Activated CD4-positive, alpha-beta memory T cell treated with anti-CD3 and anti-CD28 coated beads for 36 hours (primary cell): ENCODE measurements at regions of chr13 and their contacts with region 1.

Region 1: GRCh38 chr13:76991796-76992547 is at the start of gene CLN5:
- DNase-seq: peak; percentile 97
- H3K4me3 Mint-ChIP-seq: peak within 1 kb of the TSS; percentile 94
- H3K27ac Mint-ChIP-seq: peak within 1 kb of the TSS; percentile 99
- H3K4me1 Mint-ChIP-seq: peaks cover 41% of the 10 kb centered on the region
- H3K27me3 Mint-ChIP-seq: peaks cover 1% of the 10 kb centered on the region
- total RNA-seq, gene CLN5: 12.4 to 14.0 TPM

Region 2: DNA sequence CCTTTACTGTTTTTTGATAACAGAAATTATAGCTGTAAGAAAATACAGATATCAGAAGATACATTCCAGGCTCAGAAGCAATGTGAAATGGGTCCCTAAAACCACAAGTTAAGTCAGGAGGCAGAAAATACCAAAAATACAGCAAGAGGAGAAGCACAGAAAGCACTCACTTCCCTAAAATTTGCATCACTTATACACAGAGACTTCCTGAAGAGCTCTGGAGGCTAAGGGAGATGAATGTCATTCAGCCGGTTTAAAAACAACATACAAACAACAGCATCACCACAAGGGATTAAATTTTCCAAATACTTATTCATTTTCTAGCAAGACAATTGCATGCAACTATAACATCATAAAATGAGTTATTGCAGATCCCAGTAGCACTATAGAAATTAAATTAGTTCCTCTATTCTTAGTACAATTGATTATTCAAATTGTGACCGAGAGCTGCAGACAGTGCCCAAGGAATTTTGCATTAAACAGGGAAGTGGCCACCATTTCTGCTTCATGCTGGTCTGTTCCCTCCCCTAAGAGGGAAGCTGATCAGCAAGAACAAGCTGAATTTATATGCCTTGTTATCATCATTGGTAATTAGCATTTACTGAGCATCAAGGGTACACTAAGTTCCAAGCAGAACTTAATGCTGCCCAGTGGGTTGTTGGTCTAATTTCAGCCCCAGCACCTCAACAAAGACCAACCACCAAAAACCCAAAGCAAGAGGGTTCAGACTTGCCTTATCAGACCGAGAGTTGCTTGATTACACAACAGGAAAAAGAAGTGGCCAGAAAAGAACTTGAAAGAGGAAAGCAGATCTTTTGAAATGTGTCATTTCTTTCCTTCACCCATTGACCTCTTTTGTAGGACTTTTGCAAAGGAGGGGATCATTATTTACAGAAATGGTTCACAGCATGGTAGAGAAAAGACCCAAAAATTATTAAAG is 246.4 kb before region 1 on chr13:
- CTCF ChIA-PET with region 1: no interaction called
- POLR2A ChIA-PET with region 1: no interaction called
- intact Hi-C with region 1: no loop called
- DNase-seq: no peak
- H3K4me3 Mint-ChIP-seq: no peak overlapping the region
- H3K27ac Mint-ChIP-seq: no peak overlapping the region
- H3K4me1 Mint-ChIP-seq: no peaks in the 10 kb centered on the region
- H3K27me3 Mint-ChIP-seq: peaks cover 6% of the 10 kb centered on the region

Region 3: GRCh38 chr13:76828316-76828741 is 163.6 kb before region 1 on chr13:
- CTCF ChIA-PET with region 1: no interaction called
- POLR2A ChIA-PET with region 1: no interaction called
- intact Hi-C with region 1: loop called (anchors 1 kb)
- DNase-seq: peak; percentile 22
- H3K4me3 Mint-ChIP-seq: no peak overlapping the region
- H3K27ac Mint-ChIP-seq: peak overlapping the region; percentile 1
- H3K4me1 Mint-ChIP-seq: peaks cover 10% of the 10 kb centered on the region
- H3K27me3 Mint-ChIP-seq: peaks cover 2% of the 10 kb centered on the region

Region 4: DNA sequence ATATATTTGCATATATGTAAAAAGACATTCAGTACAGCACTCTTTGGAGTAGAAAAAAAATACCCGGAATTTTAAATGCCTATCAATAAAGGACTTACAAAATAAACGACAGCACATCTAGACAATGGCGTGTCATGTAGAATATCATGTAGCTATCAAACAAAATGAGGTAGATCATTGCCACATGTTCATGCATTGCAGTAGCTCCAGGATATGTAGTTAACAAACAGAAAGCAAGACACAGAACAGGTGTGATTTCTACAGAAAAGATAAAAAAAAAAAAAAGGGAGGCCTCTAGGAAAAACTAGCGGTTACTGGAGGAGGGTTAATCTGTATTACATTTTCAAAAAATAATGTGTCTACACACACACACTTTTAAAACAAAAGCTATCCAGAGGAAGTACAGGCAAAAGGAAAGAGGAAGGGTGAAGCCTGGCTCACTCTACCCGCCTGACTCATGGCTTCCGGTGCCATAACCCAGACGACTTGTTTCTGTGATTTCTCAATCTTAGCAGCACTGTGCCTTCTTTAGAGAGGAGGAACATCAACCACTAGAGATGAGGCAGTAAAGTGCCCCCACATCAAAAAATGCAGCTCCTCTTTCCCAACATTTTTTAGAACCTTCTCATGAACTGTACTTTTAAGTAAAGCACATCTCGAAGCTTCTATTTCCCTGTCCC is 112.6 kb before region 1 on chr13:
- CTCF ChIA-PET with region 1: no interaction called
- POLR2A ChIA-PET with region 1: interaction called, 5 read pairs
- intact Hi-C with region 1: loop called (anchors 1 kb)
- DNase-seq: peak; percentile 82
- H3K4me3 Mint-ChIP-seq: peak overlapping the region; percentile 60
- H3K27ac Mint-ChIP-seq: peak overlapping the region; percentile 77
- H3K4me1 Mint-ChIP-seq: peaks cover 33% of the 10 kb centered on the region
- H3K27me3 Mint-ChIP-seq: no peaks in the 10 kb centered on the region

Region 5: DNA sequence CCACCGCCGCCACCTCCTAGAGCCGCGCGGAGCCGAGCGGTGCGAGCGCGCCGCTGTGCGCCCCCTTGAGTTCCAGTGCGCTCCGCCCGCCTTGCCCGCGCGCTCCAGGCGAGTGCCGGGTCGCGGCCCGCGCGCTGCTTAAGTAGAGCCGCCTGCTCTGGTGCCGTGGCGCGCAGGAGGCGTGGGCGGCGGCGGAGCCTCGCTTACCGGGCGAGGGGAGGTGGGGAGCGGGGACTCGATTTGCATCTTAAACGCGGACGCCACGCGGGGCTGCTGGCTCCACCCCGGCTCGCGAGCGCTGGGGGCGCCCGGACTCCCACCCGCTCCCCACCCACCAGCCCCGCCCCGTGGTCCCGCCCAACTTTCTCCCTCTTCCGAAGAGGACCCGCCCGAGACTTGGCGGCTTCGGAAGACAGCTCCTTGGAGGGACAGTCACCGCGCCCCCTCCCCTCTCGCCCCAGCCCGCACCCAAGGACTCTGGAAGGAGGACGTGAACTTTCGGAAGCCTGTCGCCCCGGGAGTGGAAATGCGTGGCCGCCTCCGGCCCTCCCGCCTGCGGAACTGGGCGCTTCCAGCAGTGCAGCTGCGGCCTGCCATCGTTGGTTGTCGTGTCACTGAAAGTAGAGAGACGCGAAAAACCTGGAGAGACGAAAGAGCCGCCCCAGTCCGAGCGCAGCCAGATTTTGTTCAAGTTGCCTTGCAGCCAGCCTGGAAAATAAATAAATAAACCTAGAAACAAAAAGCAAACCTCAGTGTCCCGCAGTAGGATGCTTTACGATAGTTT is 105.5 kb before region 1 on chr13 and contains the start of gene KCTD12:
- CTCF ChIA-PET with region 1: interaction called, 4 read pairs
- POLR2A ChIA-PET with region 1: interaction called, 5 read pairs
- intact Hi-C with region 1: loop called (anchors 1 kb)
- DNase-seq: peak; percentile 77
- H3K4me3 Mint-ChIP-seq: peak within 1 kb of the TSS; percentile 84
- H3K27ac Mint-ChIP-seq: peak within 1 kb of the TSS; percentile 50
- H3K4me1 Mint-ChIP-seq: peaks cover 30% of the 10 kb centered on the region
- H3K27me3 Mint-ChIP-seq: peaks cover 12% of the 10 kb centered on the region
- total RNA-seq, gene KCTD12: 6.1 to 6.7 TPM

Region 6: DNA sequence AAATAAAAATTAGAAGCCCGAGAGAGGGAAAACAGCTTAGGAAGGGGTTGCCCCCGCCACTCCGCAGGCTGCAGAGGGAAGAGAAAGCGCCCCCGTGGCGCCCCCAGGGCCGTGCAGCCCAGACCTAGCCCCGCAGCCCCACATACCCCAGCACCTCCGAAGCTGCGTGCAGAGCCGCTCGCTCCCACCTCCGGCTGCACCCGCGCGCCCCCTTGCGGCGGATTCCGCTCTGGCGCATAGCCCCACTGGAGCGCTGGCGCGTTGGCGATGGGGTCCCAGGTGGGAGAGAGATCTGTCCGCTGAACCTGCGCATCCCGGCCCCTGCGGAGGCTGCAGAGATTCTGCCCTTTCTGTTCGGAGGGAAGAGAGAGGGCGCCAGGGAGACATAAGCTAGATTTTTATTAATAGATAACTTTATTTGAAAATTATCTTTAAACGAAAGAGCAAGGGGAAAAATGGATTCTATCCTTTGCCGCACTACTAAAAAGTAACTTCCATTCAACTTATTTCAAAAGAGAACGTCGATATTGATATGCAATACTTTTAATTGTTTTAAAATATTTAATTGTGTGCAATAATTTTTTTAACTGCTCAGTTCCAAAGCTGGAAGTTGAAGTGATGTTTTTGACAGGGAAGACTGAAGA is 11.8 kb before region 1 on chr13:
- CTCF ChIA-PET with region 1: interaction called, 17 read pairs
- POLR2A ChIA-PET with region 1: interaction called, 4 read pairs
- intact Hi-C with region 1: no loop called
- DNase-seq: peak; percentile 88
- H3K4me3 Mint-ChIP-seq: no peak overlapping the region
- H3K27ac Mint-ChIP-seq: no peak overlapping the region
- H3K4me1 Mint-ChIP-seq: peaks cover 6% of the 10 kb centered on the region
- H3K27me3 Mint-ChIP-seq: peaks cover 17% of the 10 kb centered on the region

Region 7: GRCh38 chr13:77002590-77003190 is 10.7 kb after region 1 on chr13:
- CTCF ChIA-PET with region 1: interaction called, 21 read pairs
- POLR2A ChIA-PET with region 1: interaction called, 10 read pairs
- intact Hi-C with region 1: loop called (anchors 1 kb)
- DNase-seq: no peak
- H3K4me3 Mint-ChIP-seq: no peak overlapping the region
- H3K27ac Mint-ChIP-seq: peak overlapping the region; percentile 1
- H3K4me1 Mint-ChIP-seq: peaks cover 39% of the 10 kb centered on the region
- H3K27me3 Mint-ChIP-seq: no peaks in the 10 kb centered on the region

Region 8: GRCh38 chr13:77009011-77009410 is 17.0 kb after region 1 on chr13:
- CTCF ChIA-PET with region 1: interaction called, 3 read pairs
- POLR2A ChIA-PET with region 1: interaction called, 8 read pairs
- intact Hi-C with region 1: loop called (anchors 1 kb)
- DNase-seq: peak; percentile 28
- H3K4me3 Mint-ChIP-seq: no peak overlapping the region
- H3K27ac Mint-ChIP-seq: peak overlapping the region; percentile 64
- H3K4me1 Mint-ChIP-seq: peaks cover 41% of the 10 kb centered on the region
- H3K27me3 Mint-ChIP-seq: no peaks in the 10 kb centered on the region

Region 9: DNA sequence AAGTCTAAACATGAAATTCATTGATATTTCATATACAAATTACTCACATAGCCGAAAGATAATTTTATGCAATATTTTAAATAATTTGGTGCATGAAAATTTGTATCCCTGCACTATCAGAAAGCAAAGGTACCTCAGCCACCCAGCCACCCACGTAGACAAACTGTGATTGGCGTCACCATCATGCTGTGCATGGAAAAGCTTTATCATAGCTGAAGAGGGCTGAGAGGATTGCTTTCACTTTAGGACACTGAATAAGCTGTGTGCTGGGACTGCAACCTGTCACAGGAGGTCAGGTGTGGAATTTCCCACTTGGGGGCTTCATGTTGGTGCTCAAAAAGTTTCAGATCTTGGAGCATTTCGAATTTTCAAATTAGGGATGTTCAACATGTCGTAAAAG is 238.6 kb after region 1 on chr13:
- CTCF ChIA-PET with region 1: no interaction called
- POLR2A ChIA-PET with region 1: no interaction called
- intact Hi-C with region 1: no loop called
- DNase-seq: peak; percentile 33
- H3K4me3 Mint-ChIP-seq: no peak overlapping the region
- H3K27ac Mint-ChIP-seq: peak overlapping the region; percentile 24
- H3K4me1 Mint-ChIP-seq: peaks cover 15% of the 10 kb centered on the region
- H3K27me3 Mint-ChIP-seq: no peaks in the 10 kb centered on the region